ENCODE measurements at regions of chr13 and their contacts with region 1.

Region 1: GRCh38 chr13:59318320-59318930 is 845.3 kb downstream of the DIAPH3 start:
- DNase-seq: peak; percentile 74
- ATAC-seq: peak; percentile 37
- H3K4me3 Mint-ChIP-seq: no peak overlapping the region
- H3K27ac Mint-ChIP-seq: no peak overlapping the region
- H3K4me1 Mint-ChIP-seq: no peaks in the 10 kb centered on the region
- H3K27me3 Mint-ChIP-seq: no peaks in the 10 kb centered on the region
- CTCF ChIP-seq: peak; percentile 72

Region 2: GRCh38 chr13:58855283-58855682 is 463.1 kb before region 1 on chr13:
- CTCF ChIA-PET with region 1: no interaction called
- POLR2A ChIA-PET with region 1: no interaction called
- intact Hi-C with region 1: no loop called
- DNase-seq: no peak
- ATAC-seq: no peak
- H3K4me3 Mint-ChIP-seq: no peak overlapping the region
- H3K27ac Mint-ChIP-seq: no peak overlapping the region
- H3K4me1 Mint-ChIP-seq: no peaks in the 10 kb centered on the region
- H3K27me3 Mint-ChIP-seq: no peaks in the 10 kb centered on the region
- CTCF ChIP-seq: no peak

Region 3: GRCh38 chr13:59157181-59157580 is 161.2 kb before region 1 on chr13:
- CTCF ChIA-PET with region 1: no interaction called
- POLR2A ChIA-PET with region 1: no interaction called
- intact Hi-C with region 1: no loop called
- DNase-seq: no peak
- ATAC-seq: no peak
- H3K4me3 Mint-ChIP-seq: no peak overlapping the region
- H3K27ac Mint-ChIP-seq: no peak overlapping the region
- H3K4me1 Mint-ChIP-seq: no peaks in the 10 kb centered on the region
- H3K27me3 Mint-ChIP-seq: no peaks in the 10 kb centered on the region
- CTCF ChIP-seq: no peak

Region 4: DNA sequence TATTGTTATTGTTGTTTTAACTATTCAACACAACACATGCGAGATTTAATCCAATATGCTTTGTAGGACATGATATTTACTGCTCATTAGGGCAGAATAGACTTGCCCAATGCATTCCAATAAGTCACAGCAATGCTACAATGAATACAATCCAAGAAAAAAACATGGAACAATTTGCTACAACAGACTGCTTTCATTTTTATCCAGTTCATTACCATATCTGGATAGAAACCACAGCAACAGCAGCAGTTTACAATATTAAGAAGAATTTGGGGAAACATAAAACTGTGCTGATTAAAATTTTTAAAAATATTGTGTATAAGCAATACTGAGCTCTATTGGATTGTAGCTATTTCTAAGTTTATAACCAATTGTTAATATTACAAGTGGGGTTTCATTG is 12.3 kb after region 1 on chr13:
- CTCF ChIA-PET with region 1: interaction called, 12 read pairs
- POLR2A ChIA-PET with region 1: no interaction called
- intact Hi-C with region 1: no loop called
- DNase-seq: no peak
- ATAC-seq: no peak
- H3K4me3 Mint-ChIP-seq: no peak overlapping the region
- H3K27ac Mint-ChIP-seq: no peak overlapping the region
- H3K4me1 Mint-ChIP-seq: no peaks in the 10 kb centered on the region
- H3K27me3 Mint-ChIP-seq: peaks cover 4% of the 10 kb centered on the region
- CTCF ChIP-seq: no peak